A549 (cell line): ENCODE measurements at regions of chr16 and their contacts with region 1.

Region 1: GRCh38 chr16:66728117-66728787 is 23.2 kb downstream of the DYNC1LI2 start:
- DNase-seq: peak; percentile 61 to 66
- ATAC-seq: peak; percentile 90 to 94
- H3K4me3 ChIP-seq: no peak overlapping the region
- H3K27ac ChIP-seq: no peak overlapping the region
- H3K4me1 ChIP-seq: no peaks in the 10 kb centered on the region
- CTCF ChIP-seq: peak; percentile 80
- EP300 ChIP-seq: no peak
- POLR2A ChIP-seq: no peak
- RAD21 ChIP-seq: peak; percentile 37 to 52; a peak in 3 of 5 replicates

Region 2: DNA sequence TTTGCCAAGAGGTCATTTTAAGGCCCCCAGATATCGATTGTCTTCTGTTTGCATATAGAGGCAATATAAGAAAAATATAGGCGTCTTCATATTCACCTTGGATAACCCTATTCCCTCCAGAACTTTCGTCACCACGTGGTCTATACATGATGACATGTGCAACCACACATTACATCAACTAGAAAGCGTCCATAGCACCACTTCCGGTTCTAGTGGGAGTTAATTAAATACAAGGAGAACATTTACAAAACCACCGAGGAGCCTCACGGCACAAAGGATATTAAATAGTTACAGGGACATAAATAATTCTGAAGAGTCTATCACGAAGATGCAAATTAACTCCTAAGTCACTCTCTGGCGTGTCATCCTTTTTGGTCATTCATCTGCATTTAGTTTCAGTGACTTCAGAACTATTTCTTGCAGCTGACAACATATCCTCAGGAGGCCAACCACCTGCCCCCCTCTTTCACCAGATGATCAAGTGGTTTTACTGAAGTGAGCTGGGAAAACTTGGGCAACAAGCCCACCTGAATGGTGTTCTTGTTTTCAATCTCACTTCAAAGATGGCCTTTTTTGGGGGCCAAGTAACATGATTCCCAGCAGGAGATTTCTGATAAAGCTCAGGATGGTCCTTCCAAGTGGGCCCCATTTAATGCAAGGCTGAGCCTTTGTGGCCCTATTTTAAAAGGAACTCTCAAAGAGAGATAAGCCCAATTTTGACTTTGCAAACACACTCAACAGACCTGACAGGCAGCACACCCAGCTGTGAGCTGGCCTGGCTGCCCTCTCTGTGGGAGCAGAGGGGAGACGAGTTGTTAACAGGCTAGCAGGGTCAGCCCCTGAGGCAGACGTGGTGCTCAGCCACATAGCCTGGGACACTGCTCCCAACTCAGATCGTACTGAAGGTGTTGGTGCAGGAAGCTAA is 108.5 kb before region 1 on chr16:
- CTCF ChIA-PET with region 1: no interaction called
- POLR2A ChIA-PET with region 1: no interaction called
- DNase-seq: no peak
- ATAC-seq: no peak
- H3K4me3 ChIP-seq: no peak overlapping the region
- H3K27ac ChIP-seq: no peak overlapping the region
- H3K4me1 ChIP-seq: peaks cover 24% of the 10 kb centered on the region
- CTCF ChIP-seq: no peak
- EP300 ChIP-seq: no peak
- POLR2A ChIP-seq: no peak
- RAD21 ChIP-seq: no peak

Region 3: DNA sequence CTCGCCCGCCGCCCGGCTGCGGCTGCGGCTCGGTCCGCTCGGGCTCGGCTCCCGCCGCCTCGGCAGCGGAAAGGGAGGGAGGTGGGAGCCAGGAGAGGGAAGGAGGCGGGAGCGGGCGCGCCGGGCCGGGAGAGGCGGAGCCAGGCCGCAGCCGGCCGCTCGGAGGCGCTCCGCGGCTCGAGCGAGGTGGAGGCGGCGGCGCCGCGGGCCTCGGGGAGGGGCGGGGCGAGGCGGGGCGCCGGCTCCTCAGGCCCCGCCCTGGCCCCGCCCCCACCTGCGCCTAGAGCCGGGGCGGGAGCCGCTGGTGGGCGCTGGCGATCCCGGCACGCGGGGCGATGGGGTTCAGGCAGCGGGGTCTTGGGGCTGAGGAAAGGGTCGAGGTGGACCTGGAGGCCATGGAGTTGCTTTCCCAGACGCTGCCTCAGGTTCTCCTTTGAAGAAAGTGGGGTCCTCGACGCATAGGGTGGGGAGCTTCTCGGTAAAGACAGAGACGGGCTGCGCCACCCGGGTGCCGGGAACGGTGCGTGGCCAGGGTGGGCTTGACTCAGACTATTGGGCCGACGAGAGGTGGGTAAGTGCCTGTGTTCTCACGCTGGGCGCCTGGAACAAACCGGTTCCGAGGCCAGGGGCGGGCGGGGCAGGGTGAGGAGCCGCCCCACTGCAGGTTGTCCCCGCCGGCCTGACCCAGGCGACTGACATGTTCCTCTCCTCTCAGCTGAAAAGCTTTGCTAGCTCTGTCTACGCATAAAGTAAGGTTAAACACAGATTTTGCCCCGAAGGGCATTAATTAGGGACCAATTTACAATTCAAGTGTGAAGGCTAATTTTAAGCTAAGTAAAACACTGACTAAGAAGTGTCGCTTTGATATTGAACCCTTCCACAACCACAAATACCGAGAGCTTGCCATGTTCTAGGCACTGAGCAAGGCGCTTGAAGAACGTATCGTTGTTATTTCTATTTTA is 31.3 kb before region 1 on chr16 and contains the start of gene CMTM4:
- CTCF ChIA-PET with region 1: interaction called, 19 read pairs
- POLR2A ChIA-PET with region 1: no interaction called
- DNase-seq: peak; percentile 81 to 84
- ATAC-seq: peak; percentile 89 to 93
- H3K4me3 ChIP-seq: peak within 1 kb of the TSS; percentile 79
- H3K27ac ChIP-seq: peak within 1 kb of the TSS; percentile 79 to 93
- H3K4me1 ChIP-seq: peaks cover 29% of the 10 kb centered on the region
- CTCF ChIP-seq: peak; percentile 56
- EP300 ChIP-seq: no peak
- POLR2A ChIP-seq: peak; percentile 25; the same call in 1 of the 2 replicates
- RAD21 ChIP-seq: no peak
- polyA plus RNA-seq, gene CMTM4: 58.6 and 61.6 TPM in 2 replicates

Region 4: GRCh38 chr16:66717112-66717675 is 11.1 kb before region 1 on chr16:
- CTCF ChIA-PET with region 1: interaction called, 19 read pairs
- POLR2A ChIA-PET with region 1: no interaction called
- DNase-seq: peak in 1 of 2 experiments; percentile 51
- ATAC-seq: peak; percentile 82 to 84
- H3K4me3 ChIP-seq: no peak overlapping the region
- H3K27ac ChIP-seq: no peak overlapping the region
- H3K4me1 ChIP-seq: no peaks in the 10 kb centered on the region
- CTCF ChIP-seq: peak; percentile 27; the same call in 2 of the 3 replicates
- EP300 ChIP-seq: no peak
- POLR2A ChIP-seq: no peak
- RAD21 ChIP-seq: 0 out of 5 replicates have a peak, but pooled peaks of 1 of the 2 experiments have one; percentile 20

Region 5: DNA sequence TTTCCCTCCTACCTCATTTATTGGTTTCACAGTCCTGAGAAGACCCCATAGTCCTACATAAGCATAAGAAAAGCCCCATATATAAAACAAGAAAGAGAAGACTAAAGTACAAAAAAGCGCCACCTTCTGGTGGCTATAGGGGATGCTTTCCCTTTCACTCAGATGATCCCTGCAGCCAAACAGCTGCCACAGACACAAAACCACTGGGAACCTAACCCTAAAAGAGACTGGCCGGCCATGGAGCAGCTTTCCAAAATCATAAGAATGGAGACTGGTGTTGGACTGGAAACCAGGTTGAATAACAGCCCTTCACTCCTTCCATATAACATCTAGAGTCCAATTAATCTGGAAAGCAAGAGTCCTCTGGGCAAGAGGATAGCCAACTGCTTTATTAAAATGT is 11.8 kb after region 1 on chr16:
- CTCF ChIA-PET with region 1: interaction called, 166 read pairs
- POLR2A ChIA-PET with region 1: interaction called, 6 read pairs
- DNase-seq: peak; percentile 51 to 80
- ATAC-seq: peak; percentile 67 to 78; a peak in 4 of 6 replicates
- H3K4me3 ChIP-seq: no peak overlapping the region
- H3K27ac ChIP-seq: peak overlapping the region; percentile 83 to 88
- H3K4me1 ChIP-seq: peaks cover 43% of the 10 kb centered on the region
- CTCF ChIP-seq: peak; percentile 63
- EP300 ChIP-seq: no peak
- POLR2A ChIP-seq: no peak
- RAD21 ChIP-seq: peak in 1 of 2 experiments; percentile 18; a peak in 2 of 5 replicates

Region 6: GRCh38 chr16:66798161-66798560 is 69.9 kb after region 1 on chr16:
- CTCF ChIA-PET with region 1: no interaction called
- POLR2A ChIA-PET with region 1: no interaction called
- DNase-seq: no peak
- ATAC-seq: no peak
- H3K4me3 ChIP-seq: no peak overlapping the region
- H3K27ac ChIP-seq: no peak overlapping the region
- H3K4me1 ChIP-seq: no peaks in the 10 kb centered on the region
- CTCF ChIP-seq: no peak
- EP300 ChIP-seq: no peak
- POLR2A ChIP-seq: no peak
- RAD21 ChIP-seq: no peak